ENCODE measurements at regions of chr14 and their contacts with region 1.

Region 1: GRCh38 chr14:34436118-34436880 is 25.7 kb downstream of the SPTSSA start:
- DNase-seq: peak; percentile 55
- ATAC-seq: peak; percentile 19; the same call in 2 of the 3 replicates
- H3K4me3 ChIP-seq: no peak overlapping the region; a peak in 1 of 6 replicates
- H3K27ac ChIP-seq: peak overlapping the region; percentile 41
- H3K4me1 ChIP-seq: peaks cover 27% of the 10 kb centered on the region
- H3K27me3 ChIP-seq: no peaks in the 10 kb centered on the region
- CTCF ChIP-seq: no peak
- EP300 ChIP-seq: no peak
- POLR2A ChIP-seq: no peak
- RAD21 ChIP-seq: no peak

Region 2: DNA sequence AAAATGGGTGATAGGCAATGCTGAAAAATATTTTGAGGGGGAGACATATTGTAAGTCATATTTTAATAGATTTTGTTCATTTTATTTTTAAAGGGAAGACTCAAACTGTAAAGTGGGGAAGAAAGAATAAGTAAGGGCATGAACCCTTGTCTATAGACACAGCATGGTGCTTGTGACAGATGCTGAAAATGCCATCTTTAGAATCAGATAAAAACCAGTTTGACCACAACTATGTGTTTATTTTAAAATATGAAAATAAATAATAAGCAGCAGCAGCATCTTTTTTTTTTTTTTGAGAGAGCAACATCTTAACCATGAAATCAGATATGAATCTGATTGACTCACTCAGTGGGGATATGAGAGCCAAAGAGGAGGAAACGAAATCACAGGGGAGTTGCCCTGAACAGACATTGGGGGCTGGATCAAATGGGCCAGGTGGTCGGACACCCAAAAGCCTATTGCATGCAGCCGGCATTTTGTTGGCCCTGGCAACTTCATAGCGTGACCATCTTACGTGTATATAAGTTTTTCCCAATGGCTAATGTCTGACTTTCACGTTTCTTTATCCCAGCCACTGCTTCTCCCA is 1176.6 kb before region 1 on chr14:
- CTCF ChIA-PET with region 1: no interaction called
- POLR2A ChIA-PET with region 1: no interaction called
- in situ Hi-C with region 1: no loop called
- intact Hi-C with region 1: no loop called
- DNase-seq: no peak
- ATAC-seq: no peak
- H3K4me3 ChIP-seq: no peak overlapping the region
- H3K27ac ChIP-seq: no peak overlapping the region
- H3K4me1 ChIP-seq: no peaks in the 10 kb centered on the region
- H3K27me3 ChIP-seq: no peaks in the 10 kb centered on the region
- CTCF ChIP-seq: no peak
- EP300 ChIP-seq: no peak
- POLR2A ChIP-seq: no peak
- RAD21 ChIP-seq: no peak

Region 3: GRCh38 chr14:34453229-34453628 is 16.9 kb after region 1 on chr14:
- CTCF ChIA-PET with region 1: no interaction called
- POLR2A ChIA-PET with region 1: interaction called, 7 read pairs
- in situ Hi-C with region 1: no loop called
- intact Hi-C with region 1: loop called (anchors 2 kb)
- DNase-seq: no peak
- ATAC-seq: peak; percentile 26
- H3K4me3 ChIP-seq: no peak overlapping the region
- H3K27ac ChIP-seq: peak overlapping the region; percentile 10
- H3K4me1 ChIP-seq: peaks cover 72% of the 10 kb centered on the region
- H3K27me3 ChIP-seq: no peaks in the 10 kb centered on the region
- CTCF ChIP-seq: no peak
- EP300 ChIP-seq: no peak
- POLR2A ChIP-seq: peak in 1 of 2 experiments; percentile 42; a peak in 1 of 4 replicates
- RAD21 ChIP-seq: peak; percentile 41; the same call in 1 of the 2 replicates

Region 4: GRCh38 chr14:34580381-34580780 is 144.1 kb after region 1 on chr14:
- CTCF ChIA-PET with region 1: no interaction called
- POLR2A ChIA-PET with region 1: no interaction called
- in situ Hi-C with region 1: no loop called
- intact Hi-C with region 1: no loop called
- DNase-seq: no peak
- ATAC-seq: no peak
- H3K4me3 ChIP-seq: no peak overlapping the region
- H3K27ac ChIP-seq: no peak overlapping the region
- H3K4me1 ChIP-seq: no peaks in the 10 kb centered on the region
- H3K27me3 ChIP-seq: no peaks in the 10 kb centered on the region
- CTCF ChIP-seq: no peak
- EP300 ChIP-seq: no peak
- POLR2A ChIP-seq: no peak
- RAD21 ChIP-seq: no peak